ENCODE measurements at regions of chr11 and their contacts with region 1.

Region 1: DNA sequence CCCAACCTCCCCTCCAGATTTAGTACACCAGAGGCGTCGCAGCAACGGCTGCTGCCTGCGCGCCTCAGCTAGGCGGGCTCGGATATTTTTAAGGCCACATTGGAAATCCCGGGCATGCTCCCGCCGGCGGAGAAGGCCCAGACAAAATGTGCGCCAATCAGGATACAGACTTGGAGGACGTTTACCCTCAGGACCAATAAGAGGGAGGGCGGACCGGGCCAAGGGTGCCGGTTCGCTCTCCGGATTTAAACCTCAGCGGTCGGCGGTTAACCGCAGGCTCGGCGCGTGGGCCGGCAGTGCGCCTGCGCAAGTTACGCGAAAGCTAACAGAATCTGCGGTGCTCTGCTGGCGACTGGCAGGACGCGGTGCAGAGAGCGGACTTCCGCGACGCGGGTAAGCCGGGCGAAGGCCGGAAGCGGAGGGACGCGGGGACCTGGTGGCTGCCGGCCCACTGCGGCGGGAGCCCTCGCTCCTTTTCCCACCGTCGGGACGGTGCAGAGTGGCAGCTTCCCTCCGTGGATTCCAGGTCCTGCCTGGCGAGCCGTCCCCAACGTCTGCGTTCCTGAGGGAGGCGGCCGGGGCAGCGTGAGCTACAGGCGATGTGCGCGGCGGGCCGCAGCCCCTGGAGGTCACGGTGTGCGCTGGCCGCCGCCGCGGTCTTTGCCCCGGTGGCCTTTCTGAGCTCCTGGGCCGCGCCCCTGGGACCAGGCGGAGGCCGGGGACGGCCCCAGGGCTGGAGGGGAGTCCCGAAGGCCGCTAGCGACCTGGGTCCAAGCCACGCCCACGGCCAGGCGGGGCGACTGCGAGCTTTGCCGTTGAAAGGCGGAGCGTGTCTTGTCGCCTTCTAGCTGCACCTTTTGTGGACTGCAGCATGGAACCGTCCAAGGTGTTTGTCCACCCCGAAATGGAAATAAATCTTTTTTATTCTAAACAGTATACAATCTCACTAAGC is at the start of gene HYLS1:
- DNase-seq: peak; percentile 87 to 98 (median 91)
- ATAC-seq: peak; percentile 88
- H3K4me3 ChIP-seq: peak within 1 kb of the TSS; percentile 63
- H3K4me3 Mint-ChIP-seq: peak within 1 kb of the TSS; percentile 95
- H3K27ac ChIP-seq: peak within 1 kb of the TSS; percentile 71 to 78
- H3K27ac Mint-ChIP-seq: peak within 1 kb of the TSS; percentile 92
- H3K4me1 ChIP-seq: peaks cover 20% of the 10 kb centered on the region
- H3K4me1 Mint-ChIP-seq: peaks cover 50% of the 10 kb centered on the region
- H3K27me3 ChIP-seq: no peaks in the 10 kb centered on the region
- H3K27me3 Mint-ChIP-seq: no peaks in the 10 kb centered on the region
- CTCF ChIP-seq: no peak
- total RNA-seq, gene HYLS1: 1.2 to 1.3 TPM

Region 2: DNA sequence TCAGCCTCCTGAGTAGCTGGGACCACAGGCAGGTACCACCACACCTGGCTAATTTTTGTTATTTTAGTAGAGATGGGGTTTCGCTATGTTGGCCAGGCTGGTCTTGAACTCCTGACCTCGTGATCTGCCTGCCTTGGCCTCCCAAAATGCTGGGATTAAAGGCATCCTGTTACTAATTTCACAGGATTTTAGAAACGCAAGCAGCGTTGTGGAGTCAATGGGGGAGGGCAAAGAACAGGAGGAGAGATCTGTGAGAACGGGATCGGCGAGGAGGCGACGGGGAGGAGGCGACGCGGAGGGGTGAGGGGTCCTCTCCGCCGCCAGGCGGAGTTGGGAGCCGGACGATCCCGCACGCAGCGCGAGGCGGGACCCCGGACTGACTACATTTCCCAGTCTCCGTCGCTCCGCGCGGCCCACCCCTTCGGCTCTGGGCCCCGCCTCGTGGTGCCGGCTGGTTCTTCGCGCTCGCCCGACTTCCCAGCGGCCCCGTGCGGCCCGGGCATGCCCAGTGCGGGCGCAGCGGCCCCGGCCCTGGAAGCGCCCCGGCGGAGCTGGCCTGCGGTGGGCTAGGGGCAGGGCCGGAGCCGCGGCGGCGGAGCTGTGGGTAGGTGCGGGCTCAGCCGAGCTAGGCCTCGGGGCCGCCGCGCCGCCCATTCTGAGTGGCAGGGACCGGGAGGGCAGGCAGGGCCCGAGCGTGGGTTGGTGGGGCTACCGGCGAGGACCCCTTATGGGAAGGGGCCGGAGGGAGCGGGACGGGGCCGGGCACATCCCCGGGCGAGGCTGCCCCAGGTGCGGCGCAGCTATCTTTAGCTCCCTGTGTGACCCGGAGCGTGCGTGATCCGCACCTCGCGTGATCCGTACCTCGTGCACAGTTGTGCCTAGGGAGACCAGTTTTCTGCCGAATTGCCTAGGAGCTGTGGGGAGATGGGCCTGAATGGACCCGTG is 318.4 kb before region 1 on chr11 and contains the start of gene EI24:
- CTCF ChIA-PET with region 1: no interaction called
- POLR2A ChIA-PET with region 1: interaction called, 21 read pairs
- intact Hi-C with region 1: loop called in 1 of 2 experiments (anchors 5 kb)
- DNase-seq: peak; percentile 76 to 95 (median 86)
- ATAC-seq: peak; percentile 94
- H3K4me3 ChIP-seq: peak within 1 kb of the TSS; percentile 80
- H3K4me3 Mint-ChIP-seq: peak within 1 kb of the TSS; percentile 95
- H3K27ac ChIP-seq: peak within 1 kb of the TSS; percentile 68 to 74
- H3K27ac Mint-ChIP-seq: peak within 1 kb of the TSS; percentile 84
- H3K4me1 ChIP-seq: peaks cover 18% of the 10 kb centered on the region
- H3K4me1 Mint-ChIP-seq: peaks cover 26% of the 10 kb centered on the region
- H3K27me3 ChIP-seq: no peaks in the 10 kb centered on the region
- H3K27me3 Mint-ChIP-seq: no peaks in the 10 kb centered on the region
- CTCF ChIP-seq: peak; percentile 76
- total RNA-seq, gene EI24: 21.0 to 22.8 TPM

Region 3: DNA sequence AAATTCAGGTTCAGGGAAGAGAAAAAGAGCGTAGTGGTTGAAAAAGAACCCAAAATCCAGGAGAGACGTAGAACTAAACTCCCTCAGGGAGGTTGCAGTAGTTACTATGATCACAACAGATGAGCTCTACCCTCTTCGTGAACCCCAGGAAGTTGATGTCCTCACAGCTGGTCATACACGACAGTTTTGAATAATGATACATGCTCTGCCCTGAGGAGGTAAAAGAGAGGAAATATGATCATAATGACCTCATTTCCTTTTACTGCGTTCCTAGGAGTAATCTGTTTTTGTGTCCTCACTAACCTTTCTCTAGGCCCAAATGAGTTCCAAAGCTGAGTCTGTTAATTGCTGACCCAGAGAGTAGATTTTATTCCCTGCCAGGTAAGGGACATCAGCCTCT is 110.3 kb before region 1 on chr11:
- CTCF ChIA-PET with region 1: no interaction called
- POLR2A ChIA-PET with region 1: no interaction called
- intact Hi-C with region 1: no loop called
- DNase-seq: no peak
- ATAC-seq: no peak
- H3K4me3 ChIP-seq: no peak overlapping the region
- H3K4me3 Mint-ChIP-seq: no peak overlapping the region
- H3K27ac ChIP-seq: no peak overlapping the region
- H3K27ac Mint-ChIP-seq: no peak overlapping the region
- H3K4me1 ChIP-seq: no peaks in the 10 kb centered on the region
- H3K4me1 Mint-ChIP-seq: no peaks in the 10 kb centered on the region
- H3K27me3 ChIP-seq: peaks cover 0 to 8% of the 10 kb centered on the region in 2 experiments
- H3K27me3 Mint-ChIP-seq: peaks cover 33% of the 10 kb centered on the region
- CTCF ChIP-seq: no peak

Region 4: DNA sequence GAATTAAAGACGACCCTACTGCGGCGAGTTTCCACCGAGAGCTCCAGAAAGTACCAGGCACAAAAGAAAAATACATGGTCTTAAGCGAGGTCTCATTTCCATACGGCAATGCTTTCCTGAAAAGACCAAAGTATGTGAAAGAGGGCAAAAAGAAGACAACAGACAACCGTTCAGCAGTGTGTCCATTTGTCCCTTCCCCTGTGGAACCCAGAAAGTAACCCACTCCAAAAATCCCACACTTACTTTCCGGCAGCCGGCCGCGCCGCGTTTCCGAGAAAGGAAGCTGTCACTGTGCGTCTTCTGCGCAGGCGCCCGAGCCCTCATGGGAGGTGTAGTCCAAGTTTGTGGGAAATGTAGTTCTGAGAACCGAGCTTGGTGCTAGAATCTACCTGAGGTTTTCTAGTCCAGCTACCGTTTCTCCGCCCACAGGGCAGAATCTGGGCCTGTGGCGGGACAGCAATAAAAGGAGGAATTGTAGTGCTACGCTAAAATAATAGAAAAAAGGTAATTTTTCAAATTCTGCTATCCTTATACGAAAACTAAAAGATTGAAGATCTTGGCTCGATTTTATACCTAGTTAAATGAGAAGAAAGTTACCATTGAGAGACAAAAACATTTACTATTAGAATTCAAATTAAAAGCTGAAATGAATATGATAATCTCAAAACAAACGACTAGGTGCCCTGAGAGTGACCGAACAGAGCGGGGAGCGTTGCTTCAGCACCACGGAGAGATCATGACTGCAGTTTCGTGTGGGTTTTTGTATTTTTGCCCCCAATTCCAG is 15.5 kb after region 1 on chr11 and contains the start of gene PUS3:
- CTCF ChIA-PET with region 1: interaction called, 4 read pairs
- POLR2A ChIA-PET with region 1: interaction called, 67 read pairs
- intact Hi-C with region 1: loop called (anchors 1 to 2 kb)
- DNase-seq: peak; percentile 75 to 92 (median 84)
- ATAC-seq: peak; percentile 93
- H3K4me3 ChIP-seq: peak within 1 kb of the TSS; percentile 86
- H3K4me3 Mint-ChIP-seq: peak within 1 kb of the TSS; percentile 95
- H3K27ac ChIP-seq: peak within 1 kb of the TSS; percentile 55
- H3K27ac Mint-ChIP-seq: peak within 1 kb of the TSS; percentile 88
- H3K4me1 ChIP-seq: peaks cover 29% of the 10 kb centered on the region
- H3K4me1 Mint-ChIP-seq: peaks cover 46% of the 10 kb centered on the region
- H3K27me3 ChIP-seq: peaks cover 9 to 27% of the 10 kb centered on the region in 2 experiments
- H3K27me3 Mint-ChIP-seq: peaks cover 41% of the 10 kb centered on the region
- CTCF ChIP-seq: no peak
- total RNA-seq, gene PUS3: 6.0 to 7.3 TPM